ENCODE measurements at regions of chr2 and their contacts with region 1.

Region 1: DNA sequence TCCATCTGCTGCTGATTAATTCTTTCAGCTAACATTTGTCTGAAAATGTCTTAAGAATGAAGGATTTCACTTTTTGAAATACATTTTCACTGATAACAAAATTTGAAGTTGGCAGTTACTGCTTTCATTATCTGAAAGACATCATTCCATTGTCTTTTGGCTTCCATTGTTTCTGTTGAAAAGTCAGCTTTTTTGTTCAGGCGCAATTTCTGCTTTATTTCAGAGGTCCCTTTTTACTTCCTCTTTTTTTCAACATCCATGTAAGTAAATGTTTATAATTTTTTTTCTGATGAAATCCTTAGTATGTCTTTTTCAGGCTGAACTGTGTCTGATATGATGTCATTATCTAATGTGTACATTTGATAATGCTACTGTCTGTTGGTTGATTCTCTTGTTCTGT is 184.2 kb downstream of the RND3 start:
- DNase-seq: no peak
- ATAC-seq: no peak
- H3K4me3 ChIP-seq: no peak overlapping the region
- H3K27ac ChIP-seq: no peak overlapping the region
- H3K4me1 ChIP-seq: no peaks in the 10 kb centered on the region
- H3K27me3 ChIP-seq: no peaks in the 10 kb centered on the region
- CTCF ChIP-seq: no peak
- POLR2A ChIP-seq: no peak

Region 2: GRCh38 chr2:149261692-149262091 is 1041.6 kb before region 1 on chr2:
- intact Hi-C with region 1: loop called in 1 of 10 experiments (anchors 10 kb)
- DNase-seq: no peak
- ATAC-seq: no peak
- H3K4me3 ChIP-seq: no peak overlapping the region
- H3K27ac ChIP-seq: no peak overlapping the region
- H3K4me1 ChIP-seq: no peaks in the 10 kb centered on the region
- H3K27me3 ChIP-seq: peaks cover 0 to 5% (median 0%) of the 10 kb centered on the region in 9 donors
- CTCF ChIP-seq: no peak
- POLR2A ChIP-seq: no peak

Region 3: GRCh38 chr2:150466741-150467620 is 163.7 kb after region 1 on chr2:
- intact Hi-C with region 1: loop called in 1 of 10 experiments (anchors 5 kb)
- DNase-seq: no peak
- ATAC-seq: peak in 1 of 4 donors; percentile 35
- H3K4me3 ChIP-seq: no peak overlapping the region
- H3K27ac ChIP-seq: peak overlapping the region in 6 of 12 donors; percentile 2 to 55 (median 34)
- H3K4me1 ChIP-seq: peaks cover 0 to 27% (median 5%) of the 10 kb centered on the region in 12 donors
- H3K27me3 ChIP-seq: no peaks in the 10 kb centered on the region
- CTCF ChIP-seq: no peak
- POLR2A ChIP-seq: no peak